HEK293 (cell line): ENCODE measurements at regions of chr3 and their contacts with region 1.

Region 1: DNA sequence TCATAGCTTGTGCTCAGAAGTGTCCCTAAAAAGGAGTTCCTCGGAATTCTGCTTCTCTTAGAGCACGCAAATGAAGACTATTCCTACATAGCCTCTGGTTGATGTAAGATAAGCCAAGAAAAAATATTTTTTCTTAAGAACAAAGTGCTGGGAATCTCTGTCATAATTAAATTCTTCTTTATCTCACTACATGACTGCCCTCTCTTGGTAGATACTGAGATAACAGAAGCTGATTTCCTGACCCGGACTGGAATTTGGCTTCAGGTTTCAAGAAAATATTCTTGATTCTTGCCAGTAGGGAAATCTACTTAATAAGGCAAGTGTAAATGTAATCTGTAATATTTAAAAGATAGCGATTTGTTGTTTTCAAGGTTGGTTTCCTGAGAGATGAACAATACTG is 31.3 kb upstream of the SETMAR start:
- H3K4me3 ChIP-seq: no peak overlapping the region
- H3K27ac ChIP-seq: no peak overlapping the region
- H3K4me1 ChIP-seq: no peaks in the 10 kb centered on the region
- CTCF ChIP-seq: no peak

Region 2: GRCh38 chr3:4290272-4290893 is 18.5 kb after region 1 on chr3:
- CTCF ChIA-PET with region 1: interaction called, 13 read pairs
- POLR2A ChIA-PET with region 1: no interaction called
- H3K4me3 ChIP-seq: no peak overlapping the region
- H3K27ac ChIP-seq: no peak overlapping the region
- H3K4me1 ChIP-seq: no peaks in the 10 kb centered on the region
- CTCF ChIP-seq: peak; percentile 59; the same call in 1 of the 2 replicates

Region 3: DNA sequence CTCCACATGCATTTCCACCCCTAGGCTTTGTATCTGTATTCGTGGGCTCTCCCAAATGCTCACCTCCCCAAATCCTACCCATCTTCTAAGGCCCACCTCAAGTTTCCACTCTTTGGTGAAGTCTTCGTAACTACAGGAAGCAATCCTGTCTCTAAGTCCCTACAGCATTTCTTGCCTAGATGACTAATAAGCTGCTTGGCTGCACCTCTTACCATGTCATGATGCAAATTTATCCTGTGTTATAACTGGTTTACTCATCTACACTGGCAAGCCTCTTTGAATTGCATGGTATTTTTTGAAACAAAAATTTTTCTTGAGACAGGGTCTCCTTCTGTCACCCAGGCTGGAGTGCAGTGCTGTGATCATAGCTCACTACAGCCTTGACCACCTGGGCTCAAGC is 104.7 kb after region 1 on chr3:
- CTCF ChIA-PET with region 1: no interaction called
- POLR2A ChIA-PET with region 1: no interaction called
- H3K4me3 ChIP-seq: no peak overlapping the region
- H3K27ac ChIP-seq: no peak overlapping the region
- H3K4me1 ChIP-seq: no peaks in the 10 kb centered on the region
- CTCF ChIP-seq: no peak

Region 4: DNA sequence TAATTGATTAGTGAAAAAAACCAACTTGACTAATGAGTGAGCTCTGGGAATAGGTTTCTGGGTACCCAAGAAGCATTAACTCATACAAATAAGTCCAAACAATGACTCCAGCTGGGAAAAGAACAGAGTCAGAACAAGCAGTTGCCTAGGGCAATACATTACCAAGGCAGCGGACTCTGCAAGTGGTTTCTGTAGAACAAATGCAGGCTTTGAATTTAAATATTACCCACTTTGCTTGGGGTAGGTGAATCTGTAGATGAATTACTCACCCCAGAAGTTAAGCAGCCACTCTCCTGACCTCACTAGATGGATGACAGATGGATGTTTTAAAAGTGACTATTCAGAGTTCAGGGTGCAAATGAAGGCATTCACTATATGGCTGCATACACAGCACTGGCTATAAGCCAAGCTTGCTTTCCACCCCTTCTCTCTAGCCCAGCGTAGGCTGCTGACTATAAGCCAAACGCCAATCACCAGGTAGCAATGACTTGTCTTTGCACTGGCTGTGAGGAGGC is 634.3 kb after region 1 on chr3:
- CTCF ChIA-PET with region 1: no interaction called
- POLR2A ChIA-PET with region 1: no interaction called
- H3K4me3 ChIP-seq: no peak overlapping the region
- H3K27ac ChIP-seq: no peak overlapping the region
- H3K4me1 ChIP-seq: no peaks in the 10 kb centered on the region
- CTCF ChIP-seq: no peak